Mucosa of descending colon (tissue), 3 donors: ENCODE measurements at regions of chr17 and their contacts with region 1.

Region 1: DNA sequence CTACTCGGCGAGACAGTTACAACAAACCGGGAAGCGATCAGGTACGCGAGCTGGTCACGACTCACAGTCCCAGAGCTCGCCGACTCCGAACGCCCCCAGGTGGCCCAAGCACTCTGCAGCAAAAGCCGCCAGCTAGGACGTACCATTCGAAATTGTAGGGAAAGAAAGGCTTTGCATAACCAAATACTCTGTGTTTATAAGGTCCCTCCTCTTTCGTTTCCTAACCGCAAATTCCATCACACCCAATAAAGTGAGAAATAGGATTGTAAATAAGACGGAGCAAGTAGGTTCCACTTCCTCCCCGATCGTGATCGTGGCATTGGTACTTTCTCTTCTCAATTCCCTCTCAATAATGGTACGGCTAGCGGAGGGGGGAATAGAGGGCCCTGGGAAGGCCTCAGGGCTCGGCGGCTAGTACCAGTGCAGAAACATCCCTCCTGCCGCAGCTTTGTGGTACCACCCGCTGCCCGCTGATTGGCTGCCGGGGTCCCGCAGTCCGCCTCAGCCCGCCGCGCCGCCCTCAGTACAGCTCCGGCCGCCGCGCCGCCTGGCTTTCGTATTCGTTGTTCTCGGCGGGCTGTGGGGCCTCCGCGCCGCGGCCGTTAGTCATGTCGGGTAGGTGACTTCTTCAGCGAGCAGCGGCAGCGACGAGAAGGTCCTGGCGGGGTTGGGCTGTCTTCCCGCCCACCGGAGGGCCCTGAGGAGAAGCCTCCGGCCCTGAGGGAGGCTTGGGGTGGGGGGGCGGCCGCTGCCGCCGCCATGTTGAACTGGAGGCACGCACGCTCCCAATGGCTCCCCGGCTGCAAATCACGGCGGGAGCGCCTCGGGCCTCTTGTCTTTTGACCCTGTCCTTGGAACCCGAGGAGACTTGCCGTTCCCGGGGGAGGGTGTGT is at the start of gene TAF15:
- DNase-seq: peak; percentile 94 to 97 (median 95)
- ATAC-seq: peak; percentile 95
- H3K4me3 ChIP-seq: peak within 1 kb of the TSS; percentile 65
- H3K4me1 ChIP-seq: peaks cover 17% of the 10 kb centered on the region
- CTCF ChIP-seq: peak; percentile 67
- total RNA-seq, gene TAF15: 131 to 165 (median 159) TPM

Region 2: GRCh38 chr17:35766903-35767510 is 42.2 kb before region 1 on chr17:
- intact Hi-C with region 1: loop called (anchors 2 to 5 kb)
- DNase-seq: no peak
- ATAC-seq: no peak
- H3K4me3 ChIP-seq: no peak overlapping the region
- H3K4me1 ChIP-seq: peaks cover 8% of the 10 kb centered on the region
- CTCF ChIP-seq: no peak

Region 3: GRCh38 chr17:36072431-36073121 is 263.4 kb after region 1 on chr17:
- intact Hi-C with region 1: no loop called
- DNase-seq: peak in 2 of 3 donors; percentile 57 to 77
- ATAC-seq: peak; percentile 89
- H3K4me3 ChIP-seq: no peak overlapping the region
- H3K4me1 ChIP-seq: no peaks in the 10 kb centered on the region
- CTCF ChIP-seq: peak; percentile 30

Region 4: GRCh38 chr17:36127199-36127893 is 318.1 kb after region 1 on chr17:
- intact Hi-C with region 1: no loop called
- DNase-seq: no peak
- ATAC-seq: peak; percentile 52
- H3K4me3 ChIP-seq: no peak overlapping the region
- H3K4me1 ChIP-seq: peaks cover 22% of the 10 kb centered on the region
- CTCF ChIP-seq: no peak